AG04450 (cell line): ENCODE measurements at regions of chr11 and their contacts with region 1.

Region 1: DNA sequence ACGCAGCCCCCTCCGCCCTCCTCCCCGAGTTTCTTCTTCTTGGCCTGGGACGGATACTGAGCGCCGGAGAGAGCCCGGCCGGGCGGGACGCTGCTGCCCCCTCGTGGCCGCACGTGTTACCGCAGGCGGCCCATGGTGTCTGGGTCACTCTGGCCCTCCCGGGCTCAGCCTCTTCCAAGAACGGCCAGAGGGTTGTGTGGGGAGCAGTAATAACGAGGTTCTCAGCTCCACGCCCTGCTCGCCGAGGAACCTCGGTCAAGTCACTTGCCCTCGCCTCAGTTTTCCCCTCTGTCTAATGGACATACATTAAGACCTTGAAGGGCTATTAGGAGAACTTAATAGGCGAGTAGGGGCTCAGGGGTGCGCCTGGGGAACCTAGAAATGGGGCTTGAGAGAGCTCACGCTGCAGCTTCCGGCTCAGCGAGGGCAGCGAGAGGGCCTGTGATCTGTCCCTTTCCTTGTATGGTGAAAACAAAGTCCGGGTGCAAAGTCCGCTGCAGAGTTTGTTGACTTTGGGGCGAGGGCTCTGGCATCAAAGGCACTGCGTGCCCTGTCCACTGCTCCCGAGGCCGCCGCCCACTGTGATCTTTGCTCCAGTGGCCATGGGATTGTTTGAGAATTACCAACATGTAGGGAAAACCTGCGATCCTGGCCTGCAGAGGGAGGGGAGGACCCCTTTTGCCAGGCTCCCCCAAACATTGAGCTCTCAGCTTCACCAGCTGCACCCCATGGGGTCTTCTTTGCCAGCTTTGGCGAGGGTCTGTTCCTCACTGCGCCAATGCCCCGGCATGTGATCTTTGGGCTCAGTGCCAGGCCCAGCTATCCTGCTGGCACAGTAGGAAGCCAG is 14.4 kb upstream of the LRP5 start:
- DNase-seq: peak; percentile 24
- H3K4me3 ChIP-seq: no peak overlapping the region
- H3K27ac ChIP-seq: peak overlapping the region; percentile 2
- H3K27me3 ChIP-seq: peaks cover 5% of the 10 kb centered on the region
- CTCF ChIP-seq: peak; percentile 91

Region 2: DNA sequence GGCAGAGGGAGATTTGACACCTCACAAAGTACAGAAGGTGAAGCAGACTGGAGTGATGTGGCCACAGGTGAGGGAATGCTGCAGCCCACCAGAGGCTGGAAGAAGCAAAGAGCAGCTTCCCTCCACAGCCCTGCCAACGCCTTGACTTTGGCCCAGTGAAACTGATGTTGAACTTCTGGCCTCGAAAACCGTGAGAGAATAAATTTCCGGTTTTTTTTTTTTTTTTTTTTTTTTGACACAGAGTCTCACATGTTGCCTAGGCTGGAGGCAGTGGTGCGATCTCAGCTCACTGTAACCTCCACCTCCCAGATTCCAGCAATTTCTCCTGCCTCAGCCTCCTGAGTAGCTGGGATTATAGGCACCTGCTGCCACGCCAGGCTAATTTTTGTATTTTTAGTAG is 93.6 kb before region 1 on chr11:
- CTCF ChIA-PET with region 1: interaction called, 22 read pairs
- POLR2A ChIA-PET with region 1: no interaction called
- DNase-seq: no peak
- H3K4me3 ChIP-seq: no peak overlapping the region
- H3K27ac ChIP-seq: no peak overlapping the region
- H3K27me3 ChIP-seq: no peaks in the 10 kb centered on the region
- CTCF ChIP-seq: no peak

Region 3: GRCh38 chr11:68213555-68214174 is 84.4 kb before region 1 on chr11:
- CTCF ChIA-PET with region 1: interaction called, 22 read pairs
- POLR2A ChIA-PET with region 1: no interaction called
- DNase-seq: peak; percentile 94
- H3K4me3 ChIP-seq: peak overlapping the region; percentile 69
- H3K27ac ChIP-seq: peak overlapping the region; percentile 78
- H3K27me3 ChIP-seq: peaks cover 16% of the 10 kb centered on the region
- CTCF ChIP-seq: no peak; the same call in 1 of the 2 replicates

Region 4: DNA sequence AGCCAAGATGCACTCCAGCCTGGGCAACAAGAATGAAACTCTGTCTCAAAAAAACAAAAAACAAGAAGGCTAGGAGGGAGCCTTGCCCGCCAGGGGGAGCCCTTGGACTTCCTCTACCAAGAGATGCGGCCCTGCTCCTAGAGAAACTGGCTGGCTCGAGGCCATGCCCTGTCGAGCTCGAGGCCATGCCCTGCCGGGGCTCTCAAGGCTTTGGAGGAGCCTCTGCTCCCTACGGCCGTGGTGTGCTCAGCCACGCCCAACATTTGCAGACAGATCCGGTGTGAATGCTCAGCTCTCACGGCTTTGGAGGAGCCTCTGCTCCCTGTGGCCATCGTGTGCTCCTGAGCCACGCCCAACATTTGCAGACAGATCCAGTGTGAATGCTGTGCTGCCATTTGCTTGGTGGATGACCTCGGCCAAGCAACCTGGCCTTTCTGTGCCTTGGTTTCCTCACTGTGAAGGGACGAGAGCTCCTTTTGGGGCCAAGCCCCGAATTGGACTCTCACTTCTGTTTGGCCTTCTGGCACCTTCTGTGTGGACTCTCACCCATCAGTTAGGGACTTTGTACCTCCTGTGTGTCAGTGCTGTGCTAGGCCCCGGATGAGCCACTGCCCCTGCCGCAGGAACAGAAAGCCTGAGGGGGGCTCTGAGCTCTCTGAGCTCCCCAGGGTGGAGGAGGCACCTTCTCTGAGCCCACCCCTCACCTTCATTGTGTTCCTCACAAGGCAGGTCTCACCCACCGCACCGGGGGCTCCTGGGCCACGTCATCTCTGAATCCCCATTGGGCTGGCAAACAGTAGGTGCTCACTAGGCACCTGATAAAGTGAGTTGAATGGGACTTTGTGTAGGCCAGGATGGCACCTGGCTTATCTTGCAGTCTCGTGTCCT is 40.3 kb before region 1 on chr11:
- CTCF ChIA-PET with region 1: interaction called, 62 read pairs
- POLR2A ChIA-PET with region 1: no interaction called
- DNase-seq: peak; percentile 66
- H3K4me3 ChIP-seq: peak overlapping the region; percentile 10; the same call in 1 of the 2 replicates
- H3K27ac ChIP-seq: no peak overlapping the region
- H3K27me3 ChIP-seq: no peaks in the 10 kb centered on the region
- CTCF ChIP-seq: peak; percentile 87

Region 5: GRCh38 chr11:68271781-68272608 is 26.0 kb before region 1 on chr11 and contains the start of gene C11orf24:
- CTCF ChIA-PET with region 1: interaction called, 23 read pairs
- POLR2A ChIA-PET with region 1: interaction called, 12 read pairs
- DNase-seq: peak; percentile 82
- H3K4me3 ChIP-seq: peak within 1 kb of the TSS; percentile 95
- H3K27ac ChIP-seq: peak within 1 kb of the TSS; percentile 98
- H3K27me3 ChIP-seq: no peaks in the 10 kb centered on the region
- CTCF ChIP-seq: no peak
- polyA plus RNA-seq, gene C11orf24: 39.1 and 58.9 TPM in 2 replicates

Region 6: DNA sequence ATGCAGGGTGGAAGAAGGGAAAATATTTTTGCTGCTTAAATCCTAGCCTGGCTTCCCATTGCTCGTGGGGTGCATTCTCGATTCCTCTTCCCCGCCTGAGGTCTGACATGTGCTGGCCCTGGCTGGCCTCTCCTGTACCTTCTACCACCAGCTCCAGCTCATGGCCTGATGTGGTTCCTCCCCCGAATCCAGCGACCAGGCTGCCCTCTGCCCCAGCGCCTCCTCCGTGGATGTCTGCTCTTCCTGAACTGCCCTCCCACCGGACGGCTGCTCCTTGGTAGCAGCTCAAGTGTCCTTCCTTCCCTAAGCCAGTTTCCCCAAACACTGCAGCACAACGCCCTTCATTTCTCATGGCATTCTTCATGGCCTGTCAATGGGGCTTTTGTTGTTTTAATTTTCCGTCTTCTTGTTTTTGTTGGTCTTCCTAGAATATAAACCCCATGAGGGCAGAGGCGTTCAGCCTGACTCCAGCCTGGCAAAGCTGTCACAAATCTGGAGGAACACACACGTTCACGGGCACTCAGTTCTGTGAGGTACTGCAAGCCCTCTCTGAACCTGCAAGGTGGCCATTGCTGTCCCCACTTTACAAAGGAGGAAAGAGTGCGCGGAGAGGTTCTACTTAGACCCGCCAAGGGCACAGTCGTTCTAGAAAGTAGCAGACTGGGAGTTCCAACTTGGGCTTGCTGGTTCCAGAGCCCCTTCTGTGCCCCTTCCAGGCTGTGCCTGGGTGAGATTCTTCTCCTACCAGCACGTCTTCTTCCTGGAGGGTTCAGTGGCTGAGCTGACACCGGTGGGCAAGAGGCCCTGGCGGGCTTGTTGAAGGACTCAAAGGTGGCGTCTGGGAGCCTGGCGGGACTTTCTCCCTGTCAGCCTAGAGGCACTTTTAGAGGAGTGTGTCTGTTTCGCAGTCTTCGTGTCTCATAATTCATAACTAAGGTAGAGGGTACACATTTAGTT is 13.4 kb after region 1 on chr11:
- CTCF ChIA-PET with region 1: interaction called, 11 read pairs
- POLR2A ChIA-PET with region 1: no interaction called
- DNase-seq: no peak
- H3K4me3 ChIP-seq: no peak overlapping the region; the same call in 1 of the 2 replicates
- H3K27ac ChIP-seq: no peak overlapping the region
- H3K27me3 ChIP-seq: no peaks in the 10 kb centered on the region
- CTCF ChIP-seq: no peak

Region 7: DNA sequence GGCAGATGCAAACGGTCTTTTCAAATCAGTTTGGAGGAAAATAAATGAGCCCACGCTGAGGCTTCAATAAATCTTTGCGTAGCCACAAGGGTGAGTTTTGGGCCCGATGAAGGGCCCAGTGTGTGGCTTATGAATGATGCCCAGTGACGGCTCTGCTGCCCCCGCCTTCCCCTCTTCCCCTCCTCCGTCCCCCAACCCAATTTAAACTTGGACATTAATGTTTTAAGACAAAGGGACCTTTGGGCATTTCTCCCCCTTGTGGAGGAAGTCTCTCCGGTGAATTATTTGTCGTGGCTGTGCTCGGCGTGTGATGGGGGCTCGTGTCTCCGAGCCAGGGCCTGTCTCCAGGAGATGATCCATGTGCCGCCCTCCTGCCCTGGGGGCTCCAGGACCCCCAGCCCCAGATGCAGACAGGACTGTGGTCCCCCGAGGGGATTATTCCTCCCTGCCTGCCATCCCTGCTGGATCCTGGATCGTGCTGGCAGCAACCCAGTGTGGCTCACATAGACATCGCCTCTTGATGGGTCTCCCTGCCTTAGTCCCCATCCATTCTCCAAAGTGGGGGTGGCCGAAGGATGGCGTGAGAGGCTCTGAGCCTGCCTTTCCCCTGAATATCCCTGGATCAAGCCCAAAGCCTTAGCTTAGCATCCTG is 914.0 kb after region 1 on chr11:
- CTCF ChIA-PET with region 1: no interaction called
- POLR2A ChIA-PET with region 1: no interaction called
- DNase-seq: no peak
- H3K4me3 ChIP-seq: no peak overlapping the region
- H3K27ac ChIP-seq: no peak overlapping the region
- H3K27me3 ChIP-seq: peaks cover 3% of the 10 kb centered on the region
- CTCF ChIP-seq: peak; percentile 46